ENCODE measurements at regions of chr1 and their contacts with region 1.

Region 1: DNA sequence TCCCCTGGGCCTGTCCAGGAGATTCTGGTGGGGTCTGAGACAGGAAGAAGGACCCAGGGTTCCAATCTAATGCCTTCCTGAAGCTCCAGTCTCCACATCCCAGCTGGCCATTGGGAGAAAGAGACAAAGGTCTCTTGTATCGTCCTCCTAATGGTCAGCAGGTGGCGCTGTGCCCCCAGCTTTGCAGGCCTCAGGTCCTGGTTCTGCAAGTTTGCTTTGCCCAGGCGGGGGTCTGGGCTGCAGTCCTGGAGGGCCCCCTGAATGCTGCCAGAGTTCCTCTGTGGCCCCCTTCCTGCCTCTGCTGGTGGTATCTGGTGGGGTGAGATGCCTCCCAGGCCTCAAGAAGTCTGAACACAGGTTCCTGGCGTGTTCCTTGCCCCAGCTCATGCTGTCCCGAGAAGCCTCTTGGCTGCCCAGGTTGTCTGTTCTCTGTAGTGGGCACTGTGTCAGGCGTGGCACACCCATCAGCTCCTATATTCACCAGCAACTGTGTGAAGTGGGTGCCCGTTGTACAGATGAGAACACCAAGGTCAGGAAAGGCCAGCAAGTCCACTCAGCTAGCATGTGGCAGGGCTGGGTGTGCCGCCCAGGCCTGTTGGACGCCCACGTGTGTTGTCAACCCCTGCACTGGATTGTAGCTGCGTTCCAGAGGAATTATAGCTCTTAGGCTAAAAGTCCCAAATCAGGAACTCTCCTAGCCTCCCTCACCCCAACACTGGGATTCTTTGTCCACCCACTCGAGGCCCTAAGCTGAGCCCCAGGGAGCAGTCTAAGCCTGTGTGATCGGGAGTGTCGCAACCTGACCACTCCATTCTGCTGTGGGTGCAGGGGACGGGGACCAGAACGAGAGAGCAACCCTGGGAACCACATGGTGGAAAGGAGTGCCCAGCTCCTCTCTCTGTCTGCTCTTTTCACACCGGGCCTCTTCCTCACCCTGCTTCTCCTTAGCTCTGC is 33.9 kb upstream of the CSF3R start:
- DNase-seq: peak; percentile 87 to 90 (median 90)
- ATAC-seq: peak; percentile 83
- H3K4me3 ChIP-seq: no peak overlapping the region
- H3K27ac ChIP-seq: peak overlapping the region; percentile 11; the same call in 2 of the 3 replicates
- H3K4me1 ChIP-seq: peaks cover 29 to 37% of the 10 kb centered on the region in 2 experiments; a peak in 4 of 5 replicates
- H3K27me3 ChIP-seq: no peaks in the 10 kb centered on the region
- CTCF ChIP-seq: peak; percentile 92 to 97 (median 95)
- EP300 ChIP-seq: no peak
- POLR2A ChIP-seq: no peak
- RAD21 ChIP-seq: peak; percentile 75 to 92

Region 2: GRCh38 chr1:36446271-36446670 is 70.4 kb before region 1 on chr1:
- CTCF ChIA-PET with region 1: no interaction called
- POLR2A ChIA-PET with region 1: no interaction called
- in situ Hi-C with region 1: no loop called
- intact Hi-C with region 1: loop called (anchors 2 kb)
- DNase-seq: peak; percentile 57 to 83 (median 70)
- ATAC-seq: peak; percentile 91
- H3K4me3 ChIP-seq: no peak overlapping the region
- H3K27ac ChIP-seq: no peak overlapping the region
- H3K4me1 ChIP-seq: peaks cover 14 to 19% of the 10 kb centered on the region in 2 experiments
- H3K27me3 ChIP-seq: no peaks in the 10 kb centered on the region
- CTCF ChIP-seq: peak; percentile 87 to 93 (median 92)
- EP300 ChIP-seq: no peak
- POLR2A ChIP-seq: no peak
- RAD21 ChIP-seq: peak; percentile 76 to 93

Region 3: DNA sequence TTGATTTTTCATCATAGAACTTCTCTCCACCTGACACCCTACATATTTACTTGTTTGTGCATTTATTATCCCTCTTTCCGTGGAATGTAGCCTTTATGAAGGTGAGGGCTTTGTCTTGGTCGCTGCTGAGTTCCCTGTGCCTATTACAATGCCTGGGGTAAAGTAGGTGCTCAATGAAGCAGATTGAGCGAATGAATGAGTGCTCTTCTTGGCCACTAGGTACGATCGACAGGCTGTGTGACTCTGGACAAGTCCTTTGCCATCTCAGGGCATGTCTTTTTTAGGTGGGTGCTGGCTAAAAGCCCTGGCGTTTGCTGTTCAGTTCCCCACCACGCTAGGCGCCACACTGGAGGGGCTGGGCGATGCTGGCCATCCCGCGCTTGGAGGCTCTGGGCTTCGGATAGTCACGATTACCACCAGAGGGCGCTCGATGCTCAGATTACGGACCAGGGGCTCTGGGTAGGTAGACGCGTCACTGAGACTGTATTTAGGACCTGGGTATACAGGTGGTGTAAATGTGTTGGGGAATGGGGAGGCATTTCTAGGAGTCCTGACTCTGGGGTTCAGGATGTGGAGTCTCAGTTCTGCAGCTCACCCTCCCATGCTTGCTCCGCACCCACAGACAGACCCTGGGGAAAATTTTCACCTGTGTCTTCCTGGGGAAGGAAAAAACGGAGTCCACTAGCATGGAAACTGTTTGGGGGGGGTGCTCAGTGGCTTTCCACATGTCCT is 37.1 kb after region 1 on chr1:
- CTCF ChIA-PET with region 1: no interaction called
- POLR2A ChIA-PET with region 1: no interaction called
- in situ Hi-C with region 1: no loop called
- intact Hi-C with region 1: loop called (anchors 2 kb)
- DNase-seq: peak; percentile 84 to 90 (median 86)
- ATAC-seq: peak; percentile 100
- H3K4me3 ChIP-seq: no peak overlapping the region
- H3K27ac ChIP-seq: no peak overlapping the region
- H3K4me1 ChIP-seq: no peaks in the 10 kb centered on the region
- H3K27me3 ChIP-seq: peaks cover 16 to 33% of the 10 kb centered on the region in 2 experiments; a peak in 4 of 5 replicates
- CTCF ChIP-seq: peak; percentile 95 to 96 (median 95)
- EP300 ChIP-seq: no peak
- POLR2A ChIP-seq: no peak
- RAD21 ChIP-seq: peak; percentile 60 to 89

Measured in K562 (cell line).